CD4-positive, alpha-beta memory T cell (primary cell): ENCODE measurements at regions of chr9 and their contacts with region 1.

Region 1: GRCh38 chr9:80175286-80176150 is 603.8 kb downstream of the TLE4 start:
- DNase-seq: peak in 3 of 5 donors; percentile 5 to 16 (median 9)
- H3K4me3 ChIP-seq: no peak overlapping the region
- H3K4me3 Mint-ChIP-seq: no peak overlapping the region
- H3K27ac ChIP-seq: no peak overlapping the region
- H3K27ac Mint-ChIP-seq: no peak overlapping the region
- H3K4me1 ChIP-seq: no peaks in the 10 kb centered on the region
- H3K4me1 Mint-ChIP-seq: no peaks in the 10 kb centered on the region
- H3K27me3 ChIP-seq: no peaks in the 10 kb centered on the region
- H3K27me3 Mint-ChIP-seq: no peaks in the 10 kb centered on the region

Region 2: GRCh38 chr9:78820855-78821822 is 1354.4 kb before region 1 on chr9:
- CTCF ChIA-PET with region 1: no interaction called
- POLR2A ChIA-PET with region 1: no interaction called
- intact Hi-C with region 1: loop called (anchors 10 kb)
- DNase-seq: peak in 3 of 5 donors; percentile 11 to 21 (median 13)
- H3K4me3 ChIP-seq: no peak overlapping the region
- H3K4me3 Mint-ChIP-seq: peak overlapping the region; percentile 68 to 83 (median 76)
- H3K27ac ChIP-seq: no peak overlapping the region
- H3K27ac Mint-ChIP-seq: peak overlapping the region in 1 of 7 donors; percentile 61
- H3K4me1 ChIP-seq: no peaks in the 10 kb centered on the region
- H3K4me1 Mint-ChIP-seq: peaks cover 0 to 9% (median 4%) of the 10 kb centered on the region in 4 donors
- H3K27me3 ChIP-seq: no peaks in the 10 kb centered on the region
- H3K27me3 Mint-ChIP-seq: peaks cover 0 to 1% of the 10 kb centered on the region in 2 donors

Region 3: DNA sequence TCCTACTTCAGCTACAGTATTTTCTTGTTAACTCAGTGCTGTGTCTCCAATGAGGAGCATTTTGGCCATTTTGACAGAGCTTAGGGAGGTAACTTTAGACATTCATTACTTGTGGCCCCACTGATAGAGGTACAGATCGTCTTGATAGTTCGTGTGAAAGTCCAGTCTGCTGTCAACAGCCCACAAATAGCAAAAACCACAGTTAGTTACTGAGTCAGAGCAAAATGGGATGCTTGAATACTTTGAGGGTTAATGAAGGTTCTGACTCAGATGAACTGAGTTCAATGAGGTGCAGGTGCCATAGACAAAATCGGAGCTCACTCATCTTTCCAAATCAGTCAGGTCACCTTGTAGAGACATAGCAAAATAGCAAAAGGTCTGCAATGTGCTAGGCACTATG is 766.9 kb before region 1 on chr9:
- CTCF ChIA-PET with region 1: interaction called, 5 read pairs
- POLR2A ChIA-PET with region 1: no interaction called
- intact Hi-C with region 1: loop called (anchors 10 kb)
- DNase-seq: no peak
- H3K4me3 ChIP-seq: no peak overlapping the region
- H3K4me3 Mint-ChIP-seq: no peak overlapping the region
- H3K27ac ChIP-seq: no peak overlapping the region
- H3K27ac Mint-ChIP-seq: no peak overlapping the region
- H3K4me1 ChIP-seq: no peaks in the 10 kb centered on the region
- H3K4me1 Mint-ChIP-seq: no peaks in the 10 kb centered on the region
- H3K27me3 ChIP-seq: no peaks in the 10 kb centered on the region
- H3K27me3 Mint-ChIP-seq: peaks cover 0 to 5% of the 10 kb centered on the region in 2 donors

Region 4: GRCh38 chr9:79471580-79472543 is 703.7 kb before region 1 on chr9:
- CTCF ChIA-PET with region 1: no interaction called
- POLR2A ChIA-PET with region 1: no interaction called
- intact Hi-C with region 1: loop called (anchors 1 kb)
- DNase-seq: peak in 4 of 5 donors; percentile 2 to 14 (median 5)
- H3K4me3 ChIP-seq: no peak overlapping the region
- H3K4me3 Mint-ChIP-seq: no peak overlapping the region
- H3K27ac ChIP-seq: no peak overlapping the region
- H3K27ac Mint-ChIP-seq: no peak overlapping the region
- H3K4me1 ChIP-seq: no peaks in the 10 kb centered on the region
- H3K4me1 Mint-ChIP-seq: no peaks in the 10 kb centered on the region
- H3K27me3 ChIP-seq: no peaks in the 10 kb centered on the region
- H3K27me3 Mint-ChIP-seq: no peaks in the 10 kb centered on the region

Region 5: GRCh38 chr9:80163889-80164288 is 11.6 kb before region 1 on chr9:
- CTCF ChIA-PET with region 1: interaction called, 10 read pairs
- POLR2A ChIA-PET with region 1: no interaction called
- intact Hi-C with region 1: no loop called
- DNase-seq: no peak
- H3K4me3 ChIP-seq: no peak overlapping the region
- H3K4me3 Mint-ChIP-seq: no peak overlapping the region
- H3K27ac ChIP-seq: no peak overlapping the region
- H3K27ac Mint-ChIP-seq: no peak overlapping the region
- H3K4me1 ChIP-seq: no peaks in the 10 kb centered on the region
- H3K4me1 Mint-ChIP-seq: no peaks in the 10 kb centered on the region
- H3K27me3 ChIP-seq: no peaks in the 10 kb centered on the region
- H3K27me3 Mint-ChIP-seq: peaks cover 0 to 3% of the 10 kb centered on the region in 2 donors